ENCODE measurements at regions of chr7 and their contacts with region 1.

Region 1: GRCh38 chr7:138886501-138886917 is 88.5 kb upstream of the ATP6V0A4 start:
- DNase-seq: peak; percentile 43
- ATAC-seq: peak; percentile 70
- H3K4me3 Mint-ChIP-seq: no peak overlapping the region
- H3K27ac Mint-ChIP-seq: peak overlapping the region; percentile 64
- H3K4me1 Mint-ChIP-seq: peaks cover 18% of the 10 kb centered on the region
- H3K27me3 Mint-ChIP-seq: no peaks in the 10 kb centered on the region

Region 2: GRCh38 chr7:138863931-138864330 is 22.6 kb before region 1 on chr7:
- CTCF ChIA-PET with region 1: no interaction called
- POLR2A ChIA-PET with region 1: no interaction called
- intact Hi-C with region 1: no loop called
- DNase-seq: no peak
- ATAC-seq: no peak
- H3K4me3 Mint-ChIP-seq: no peak overlapping the region
- H3K27ac Mint-ChIP-seq: no peak overlapping the region
- H3K4me1 Mint-ChIP-seq: peaks cover 16% of the 10 kb centered on the region
- H3K27me3 Mint-ChIP-seq: peaks cover 4% of the 10 kb centered on the region

Region 3: DNA sequence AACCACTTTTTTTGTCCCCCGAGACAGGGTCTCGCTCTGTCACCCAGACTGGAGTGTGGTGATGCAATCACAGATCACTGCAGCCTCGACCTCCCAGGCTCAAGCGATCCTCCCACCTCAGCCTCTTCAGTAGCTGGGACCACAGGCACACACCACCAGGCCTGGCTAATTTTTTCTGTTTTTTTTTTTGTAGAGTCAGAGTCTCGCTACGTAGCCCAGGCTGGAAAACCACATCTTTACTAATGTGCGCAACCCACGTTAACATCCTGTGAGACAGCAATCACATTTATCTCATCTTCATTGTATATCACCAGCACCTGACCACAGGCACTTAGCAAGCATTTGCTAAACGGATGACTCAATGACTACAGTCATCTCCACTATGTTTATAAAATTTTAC is 10.7 kb before region 1 on chr7:
- CTCF ChIA-PET with region 1: interaction called, 30 read pairs
- POLR2A ChIA-PET with region 1: no interaction called
- intact Hi-C with region 1: no loop called
- DNase-seq: peak; percentile 80
- ATAC-seq: peak; percentile 98
- H3K4me3 Mint-ChIP-seq: no peak overlapping the region
- H3K27ac Mint-ChIP-seq: no peak overlapping the region
- H3K4me1 Mint-ChIP-seq: peaks cover 22% of the 10 kb centered on the region
- H3K27me3 Mint-ChIP-seq: no peaks in the 10 kb centered on the region

Region 4: DNA sequence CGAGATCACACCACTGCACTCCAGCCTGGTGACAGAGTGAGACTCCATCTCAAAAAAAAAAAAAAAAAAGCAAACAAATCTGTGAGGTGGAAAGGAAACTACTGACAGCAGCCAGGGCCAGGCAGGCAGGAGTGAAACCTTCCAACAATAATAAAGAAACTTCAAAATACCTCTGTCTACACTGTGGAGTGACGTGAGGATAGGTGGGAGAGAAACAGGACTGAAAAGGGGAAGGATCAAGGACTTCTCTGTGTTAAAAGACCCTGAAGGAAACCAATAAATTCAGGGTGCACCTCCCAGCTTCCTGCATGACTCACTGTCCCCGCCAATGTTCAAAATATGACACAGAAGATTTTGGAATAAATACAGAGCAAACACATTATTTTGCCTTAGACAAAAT is 11.7 kb after region 1 on chr7:
- CTCF ChIA-PET with region 1: interaction called, 32 read pairs
- POLR2A ChIA-PET with region 1: interaction called, 5 read pairs
- intact Hi-C with region 1: no loop called
- DNase-seq: peak; percentile 56
- ATAC-seq: peak; percentile 88
- H3K4me3 Mint-ChIP-seq: no peak overlapping the region
- H3K27ac Mint-ChIP-seq: peak overlapping the region; percentile 39
- H3K4me1 Mint-ChIP-seq: peaks cover 42% of the 10 kb centered on the region
- H3K27me3 Mint-ChIP-seq: peaks cover 5% of the 10 kb centered on the region

Region 5: GRCh38 chr7:138924501-138925225 is 38.2 kb after region 1 on chr7:
- CTCF ChIA-PET with region 1: interaction called, 12 read pairs
- POLR2A ChIA-PET with region 1: no interaction called
- intact Hi-C with region 1: no loop called
- DNase-seq: no peak
- ATAC-seq: no peak
- H3K4me3 Mint-ChIP-seq: no peak overlapping the region
- H3K27ac Mint-ChIP-seq: no peak overlapping the region
- H3K4me1 Mint-ChIP-seq: peaks cover 9% of the 10 kb centered on the region
- H3K27me3 Mint-ChIP-seq: no peaks in the 10 kb centered on the region

Region 6: GRCh38 chr7:138981332-138982203 is 95.1 kb after region 1 on chr7 and contains the start of gene KIAA1549:
- CTCF ChIA-PET with region 1: interaction called, 28 read pairs
- POLR2A ChIA-PET with region 1: interaction called, 3 read pairs
- intact Hi-C with region 1: loop called (anchors 1 to 5 kb)
- DNase-seq: peak; percentile 71
- ATAC-seq: peak; percentile 89
- H3K4me3 Mint-ChIP-seq: peak within 1 kb of the TSS; percentile 75
- H3K27ac Mint-ChIP-seq: peak within 1 kb of the TSS; percentile 12
- H3K4me1 Mint-ChIP-seq: peaks cover 13% of the 10 kb centered on the region
- H3K27me3 Mint-ChIP-seq: peaks cover 40% of the 10 kb centered on the region
- total RNA-seq, gene KIAA1549: 0.46 to 0.53 TPM

Region 7: GRCh38 chr7:139043823-139044812 is 157.6 kb after region 1 on chr7:
- CTCF ChIA-PET with region 1: interaction called, 6 read pairs
- POLR2A ChIA-PET with region 1: no interaction called
- intact Hi-C with region 1: loop called in 1 of 2 experiments (anchors 10 kb)
- DNase-seq: peak; percentile 83
- ATAC-seq: peak; percentile 50
- H3K4me3 Mint-ChIP-seq: no peak overlapping the region
- H3K27ac Mint-ChIP-seq: peak overlapping the region; percentile 53
- H3K4me1 Mint-ChIP-seq: peaks cover 64% of the 10 kb centered on the region
- H3K27me3 Mint-ChIP-seq: no peaks in the 10 kb centered on the region

Region 8: GRCh38 chr7:139058943-139059342 is 172.4 kb after region 1 on chr7:
- CTCF ChIA-PET with region 1: no interaction called
- POLR2A ChIA-PET with region 1: no interaction called
- intact Hi-C with region 1: no loop called
- DNase-seq: no peak
- ATAC-seq: peak; percentile 28
- H3K4me3 Mint-ChIP-seq: no peak overlapping the region
- H3K27ac Mint-ChIP-seq: peak overlapping the region; percentile 87
- H3K4me1 Mint-ChIP-seq: peaks cover 70% of the 10 kb centered on the region
- H3K27me3 Mint-ChIP-seq: no peaks in the 10 kb centered on the region

Region 9: GRCh38 chr7:139075031-139075652 is 188.6 kb after region 1 on chr7:
- CTCF ChIA-PET with region 1: interaction called, 16 read pairs
- POLR2A ChIA-PET with region 1: no interaction called
- intact Hi-C with region 1: loop called (anchors 1 to 10 kb)
- DNase-seq: peak; percentile 77
- ATAC-seq: peak; percentile 79
- H3K4me3 Mint-ChIP-seq: peak overlapping the region; percentile 24
- H3K27ac Mint-ChIP-seq: peak overlapping the region; percentile 76
- H3K4me1 Mint-ChIP-seq: peaks cover 70% of the 10 kb centered on the region
- H3K27me3 Mint-ChIP-seq: no peaks in the 10 kb centered on the region